ENCODE measurements at regions of chrX and their contacts with region 1.

Region 1: GRCh38 chrX:135985141-135985972 is at the start of gene SLC9A6:
- DNase-seq: peak; percentile 81
- H3K4me3 ChIP-seq: peak within 1 kb of the TSS; percentile 41 to 62 (median 54)
- H3K27ac ChIP-seq: peak within 1 kb of the TSS; percentile 81 to 94 (median 86)
- H3K4me1 ChIP-seq: peaks cover 0 to 16% (median 4%) of the 10 kb centered on the region in 4 donors
- H3K27me3 ChIP-seq: no peaks in the 10 kb centered on the region
- CTCF ChIP-seq: no peak
- EP300 ChIP-seq: no peak
- POLR2A ChIP-seq: no peak
- total RNA-seq, gene SLC9A6: 13.5 to 26.3 (median 21.7) TPM

Region 2: GRCh38 chrX:136015016-136015415 is 29.7 kb after region 1 on chrX:
- in situ Hi-C with region 1: no loop called
- intact Hi-C with region 1: loop called (anchors 2 kb)
- DNase-seq: no peak
- H3K4me3 ChIP-seq: no peak overlapping the region
- H3K27ac ChIP-seq: no peak overlapping the region
- H3K4me1 ChIP-seq: no peaks in the 10 kb centered on the region
- H3K27me3 ChIP-seq: no peaks in the 10 kb centered on the region
- CTCF ChIP-seq: no peak
- EP300 ChIP-seq: no peak
- POLR2A ChIP-seq: no peak

Region 3: GRCh38 chrX:136519070-136519469 is 533.7 kb after region 1 on chrX:
- in situ Hi-C with region 1: no loop called
- intact Hi-C with region 1: no loop called
- DNase-seq: no peak
- H3K4me3 ChIP-seq: no peak overlapping the region
- H3K27ac ChIP-seq: no peak overlapping the region
- H3K4me1 ChIP-seq: no peaks in the 10 kb centered on the region
- H3K27me3 ChIP-seq: no peaks in the 10 kb centered on the region
- CTCF ChIP-seq: no peak
- EP300 ChIP-seq: no peak
- POLR2A ChIP-seq: no peak